Psoas muscle (tissue), 8 donors: ENCODE measurements at regions of chr5 and their contacts with region 1.

Region 1: DNA sequence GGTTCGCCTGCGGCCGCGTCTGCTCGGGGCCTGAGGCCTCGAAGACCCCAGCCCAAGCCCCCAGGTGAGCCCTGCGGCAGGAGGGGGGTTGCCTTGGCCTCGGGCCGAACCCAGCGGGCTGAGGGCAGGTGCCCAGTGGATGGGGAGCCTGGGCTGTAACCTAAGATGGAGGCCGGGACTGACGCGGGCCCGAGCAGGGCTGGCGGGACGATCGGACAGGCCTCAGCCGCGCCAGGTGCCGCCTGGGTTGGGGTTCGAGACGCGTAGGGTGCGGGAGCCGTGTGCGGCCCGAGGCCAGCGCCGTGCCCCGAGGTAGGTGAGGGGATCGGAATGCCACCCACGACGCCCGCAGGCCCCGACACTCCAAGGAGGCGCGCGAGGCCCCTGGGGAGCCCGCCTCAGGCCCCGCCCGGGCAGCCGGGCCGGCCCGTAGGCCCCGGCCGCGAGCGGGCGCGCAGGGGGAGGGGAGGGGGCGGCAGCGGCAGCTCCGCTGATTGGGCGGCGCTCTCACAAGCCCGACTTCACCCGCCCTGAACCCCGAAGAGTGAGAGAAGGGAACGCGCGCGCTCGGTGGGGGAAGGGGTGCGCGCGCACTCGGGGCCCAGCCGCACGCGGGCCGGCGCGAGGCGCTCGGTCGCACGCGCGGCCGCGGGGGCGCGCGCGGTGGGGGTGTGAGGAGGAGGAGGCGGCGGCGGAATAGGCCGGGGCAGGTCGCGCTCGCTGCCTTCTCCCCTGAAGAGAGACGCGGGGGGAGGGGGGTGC is at the start of gene NSD1:
- DNase-seq: peak; percentile 92 to 95
- ATAC-seq: peak; percentile 76 to 80 (median 79)
- H3K4me3 ChIP-seq: peak within 1 kb of the TSS; percentile 93
- H3K27ac ChIP-seq: peak within 1 kb of the TSS; percentile 82
- H3K4me1 ChIP-seq: peaks cover 35% of the 10 kb centered on the region
- H3K27me3 ChIP-seq: no peaks in the 10 kb centered on the region
- CTCF ChIP-seq: no peak
- total RNA-seq, gene NSD1: 38.5 to 56.2 (median 43.2) TPM

Region 2: GRCh38 chr5:177303121-177303924 is 170.1 kb after region 1 on chr5 and contains the starts of genes PRELID1 and RAB24:
- intact Hi-C with region 1: loop called in 1 of 2 experiments (anchors 5 kb)
- DNase-seq: peak; percentile 90 to 95
- ATAC-seq: peak; percentile 87 to 92 (median 88)
- H3K4me3 ChIP-seq: peak within 1 kb of the TSS; percentile 97
- H3K27ac ChIP-seq: peak within 1 kb of the TSS; percentile 92
- H3K4me1 ChIP-seq: peaks cover 39% of the 10 kb centered on the region
- H3K27me3 ChIP-seq: no peaks in the 10 kb centered on the region
- CTCF ChIP-seq: peak; percentile 23
- total RNA-seq, gene PRELID1: 19.9 to 66.8 (median 44.3) TPM
- total RNA-seq, gene RAB24: 14.9 to 21.1 (median 20.1) TPM